ENCODE measurements at regions of chr2 and their contacts with region 1.

Region 1: DNA sequence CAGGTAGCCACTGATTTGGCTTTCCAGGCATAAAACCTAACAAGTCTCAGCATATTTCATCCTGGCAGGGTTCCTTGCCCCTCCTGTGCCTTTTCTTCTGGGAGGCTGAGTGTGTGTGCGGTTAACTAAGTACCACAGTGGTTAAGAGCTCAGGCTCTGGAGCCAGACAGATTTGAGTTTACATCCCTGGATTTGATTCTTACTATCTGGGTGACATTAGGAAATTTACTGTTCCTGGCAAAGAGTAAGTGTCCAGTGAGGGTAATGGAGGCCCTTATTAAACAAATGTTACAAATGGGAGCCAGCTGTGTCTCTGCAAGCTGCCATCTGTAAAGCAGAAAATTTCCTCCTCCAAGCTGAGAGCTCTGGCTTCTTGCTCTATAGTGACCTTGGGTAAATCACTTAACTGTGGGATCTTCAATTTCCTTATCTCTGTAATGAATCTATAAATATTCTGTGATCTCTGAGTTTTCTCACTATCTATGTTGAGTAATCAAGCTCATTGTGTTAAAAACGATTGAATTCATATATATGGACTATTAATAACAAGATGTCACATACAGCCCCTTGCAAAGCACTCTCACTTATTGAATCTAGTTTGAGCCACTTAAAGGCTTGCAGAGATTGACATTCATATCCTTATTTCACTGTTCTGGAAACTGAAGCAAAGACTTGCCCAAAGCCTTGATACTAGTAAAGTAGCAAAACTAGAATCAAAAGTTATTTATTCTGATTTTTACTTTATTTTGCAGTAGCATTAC is 6.5 kb upstream of the COBLL1 start:
- DNase-seq: no peak
- ATAC-seq: no peak
- H3K4me3 ChIP-seq: no peak overlapping the region
- H3K27ac ChIP-seq: no peak overlapping the region
- H3K4me1 ChIP-seq: no peaks in the 10 kb centered on the region
- H3K27me3 ChIP-seq: no peaks in the 10 kb centered on the region
- CTCF ChIP-seq: no peak
- POLR2A ChIP-seq: no peak

Region 2: GRCh38 chr2:164903204-164903603 is 55.0 kb after region 1 on chr2:
- intact Hi-C with region 1: loop called in 2 of 10 experiments (anchors 5 kb)
- DNase-seq: no peak
- ATAC-seq: peak in 2 of 4 donors; percentile 53 to 61
- H3K4me3 ChIP-seq: no peak overlapping the region
- H3K27ac ChIP-seq: no peak overlapping the region
- H3K4me1 ChIP-seq: peaks cover 0 to 13% (median 0%) of the 10 kb centered on the region in 12 donors
- H3K27me3 ChIP-seq: no peaks in the 10 kb centered on the region
- CTCF ChIP-seq: no peak
- POLR2A ChIP-seq: no peak

Region 3: GRCh38 chr2:164910101-164910899 is 62.1 kb after region 1 on chr2:
- intact Hi-C with region 1: loop called in 6 of 10 experiments (anchors 2 to 5 kb)
- DNase-seq: no peak
- ATAC-seq: peak in 3 of 4 donors; percentile 46 to 62 (median 50)
- H3K4me3 ChIP-seq: peak overlapping the region in 1 of 12 donors; percentile 11
- H3K27ac ChIP-seq: peak overlapping the region in 5 of 12 donors; percentile 4 to 57 (median 32)
- H3K4me1 ChIP-seq: peaks cover 0 to 49% (median 13%) of the 10 kb centered on the region in 12 donors
- H3K27me3 ChIP-seq: no peaks in the 10 kb centered on the region
- CTCF ChIP-seq: no peak
- POLR2A ChIP-seq: no peak

Region 4: GRCh38 chr2:164954954-164955701 is 107.0 kb after region 1 on chr2 and contains the start of gene SLC38A11:
- intact Hi-C with region 1: no loop called
- DNase-seq: peak; percentile 20 to 65 (median 38)
- ATAC-seq: peak; percentile 51 to 87 (median 76)
- H3K4me3 ChIP-seq: peak within 1 kb of the TSS in 11 of 12 donors; percentile 11 to 58 (median 42)
- H3K27ac ChIP-seq: peak within 1 kb of the TSS in 1 of 12 donors; percentile 18
- H3K4me1 ChIP-seq: peaks cover 0 to 8% (median 2%) of the 10 kb centered on the region in 12 donors
- H3K27me3 ChIP-seq: peaks cover 0 to 30% (median 6%) of the 10 kb centered on the region in 9 donors
- CTCF ChIP-seq: peak in 3 of 12 donors; percentile 8 to 20 (median 14)
- POLR2A ChIP-seq: no peak
- total RNA-seq, gene SLC38A11: 0.25 to 1.9 (median 0.51) TPM

Measured in heart left ventricle (tissue), 16 donors.